ENCODE measurements at regions of chr10 and their contacts with region 1.

Region 1: GRCh38 chr10:784403-785088 is 95.1 kb upstream of the DIP2C start:
- DNase-seq: peak; percentile 45
- H3K4me3 ChIP-seq: peak overlapping the region in 2 of 4 donors; percentile 31 to 40
- H3K27ac ChIP-seq: no peak overlapping the region
- H3K4me1 ChIP-seq: peaks cover 3 to 25% (median 12%) of the 10 kb centered on the region in 4 donors
- H3K27me3 ChIP-seq: peaks cover 15% of the 10 kb centered on the region
- CTCF ChIP-seq: no peak
- EP300 ChIP-seq: no peak
- POLR2A ChIP-seq: no peak

Region 2: DNA sequence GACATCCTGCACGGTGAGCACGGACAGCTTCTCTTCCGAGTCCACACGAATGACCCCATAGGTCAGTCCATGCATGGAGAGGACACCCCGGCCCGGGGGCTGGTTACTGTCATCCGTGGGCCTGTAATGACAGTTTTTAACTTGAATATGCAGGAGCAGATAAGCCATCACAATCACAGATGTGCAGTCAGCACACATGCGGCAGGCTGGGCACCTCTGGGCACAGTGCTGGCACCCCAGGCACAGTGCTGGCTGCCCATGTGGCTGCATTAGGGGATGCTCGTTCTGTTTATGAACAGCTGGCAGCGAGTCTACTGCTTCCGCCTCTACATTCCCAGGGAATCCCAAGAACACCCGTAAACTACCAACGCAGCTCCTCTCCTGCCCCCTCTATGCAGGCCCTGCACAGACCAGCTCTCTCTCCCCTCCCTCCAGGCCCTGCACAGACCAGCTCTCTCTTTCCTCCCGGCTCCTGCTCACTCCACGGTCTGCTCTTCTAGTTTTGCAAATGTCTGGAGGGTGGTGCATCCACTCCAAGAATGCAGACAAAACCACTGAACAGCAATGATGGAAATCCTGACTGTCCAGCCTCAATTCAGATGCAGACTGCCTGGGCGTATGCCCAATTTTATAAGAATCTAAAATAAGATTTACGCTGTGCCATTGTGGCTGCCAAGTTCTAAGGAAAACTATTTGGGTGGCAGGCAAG is 414.9 kb before region 1 on chr10:
- in situ Hi-C with region 1: no loop called
- intact Hi-C with region 1: loop called (anchors 10 kb)
- DNase-seq: no peak
- H3K4me3 ChIP-seq: no peak overlapping the region
- H3K27ac ChIP-seq: peak overlapping the region in 3 of 4 donors; percentile 47 to 66 (median 50)
- H3K4me1 ChIP-seq: peaks cover 3 to 17% (median 10%) of the 10 kb centered on the region in 4 donors
- H3K27me3 ChIP-seq: no peaks in the 10 kb centered on the region
- CTCF ChIP-seq: no peak
- EP300 ChIP-seq: no peak
- POLR2A ChIP-seq: no peak

Region 3: DNA sequence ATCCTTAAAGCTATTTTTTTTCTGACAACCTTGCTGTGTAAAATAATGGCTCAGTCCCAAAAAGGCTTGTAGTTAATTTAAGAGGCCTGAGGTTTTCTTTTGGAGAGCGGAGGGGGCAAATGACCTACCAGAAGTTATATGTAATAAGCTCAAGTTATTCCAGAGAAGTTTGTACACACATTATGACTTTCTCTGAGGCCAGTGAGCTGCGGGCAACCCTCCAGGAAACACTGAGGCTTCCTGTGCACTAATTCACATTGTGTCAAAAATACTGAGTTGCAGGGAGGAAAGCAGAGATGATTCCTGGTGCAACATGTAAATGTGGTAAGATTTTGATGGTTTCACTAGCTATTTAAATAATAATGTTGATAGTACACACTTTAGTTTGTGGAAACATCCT is 283.7 kb before region 1 on chr10:
- in situ Hi-C with region 1: loop called in 2 of 4 experiments (anchors 25 kb)
- intact Hi-C with region 1: loop called (anchors 10 kb)
- DNase-seq: no peak
- H3K4me3 ChIP-seq: no peak overlapping the region
- H3K27ac ChIP-seq: peak overlapping the region in 3 of 4 donors; percentile 32 to 46 (median 32)
- H3K4me1 ChIP-seq: peaks cover 0 to 16% (median 4%) of the 10 kb centered on the region in 4 donors
- H3K27me3 ChIP-seq: no peaks in the 10 kb centered on the region
- CTCF ChIP-seq: no peak
- EP300 ChIP-seq: no peak
- POLR2A ChIP-seq: no peak

Region 4: GRCh38 chr10:511101-511848 is 273.3 kb before region 1 on chr10:
- in situ Hi-C with region 1: loop called in 2 of 4 experiments (anchors 25 kb)
- intact Hi-C with region 1: loop called (anchors 10 kb)
- DNase-seq: peak; percentile 92
- H3K4me3 ChIP-seq: no peak overlapping the region
- H3K27ac ChIP-seq: peak overlapping the region; percentile 21 to 74 (median 58)
- H3K4me1 ChIP-seq: peaks cover 4 to 23% (median 17%) of the 10 kb centered on the region in 4 donors
- H3K27me3 ChIP-seq: no peaks in the 10 kb centered on the region
- CTCF ChIP-seq: peak; percentile 95 to 97 (median 96)
- EP300 ChIP-seq: no peak
- POLR2A ChIP-seq: no peak

Region 5: DNA sequence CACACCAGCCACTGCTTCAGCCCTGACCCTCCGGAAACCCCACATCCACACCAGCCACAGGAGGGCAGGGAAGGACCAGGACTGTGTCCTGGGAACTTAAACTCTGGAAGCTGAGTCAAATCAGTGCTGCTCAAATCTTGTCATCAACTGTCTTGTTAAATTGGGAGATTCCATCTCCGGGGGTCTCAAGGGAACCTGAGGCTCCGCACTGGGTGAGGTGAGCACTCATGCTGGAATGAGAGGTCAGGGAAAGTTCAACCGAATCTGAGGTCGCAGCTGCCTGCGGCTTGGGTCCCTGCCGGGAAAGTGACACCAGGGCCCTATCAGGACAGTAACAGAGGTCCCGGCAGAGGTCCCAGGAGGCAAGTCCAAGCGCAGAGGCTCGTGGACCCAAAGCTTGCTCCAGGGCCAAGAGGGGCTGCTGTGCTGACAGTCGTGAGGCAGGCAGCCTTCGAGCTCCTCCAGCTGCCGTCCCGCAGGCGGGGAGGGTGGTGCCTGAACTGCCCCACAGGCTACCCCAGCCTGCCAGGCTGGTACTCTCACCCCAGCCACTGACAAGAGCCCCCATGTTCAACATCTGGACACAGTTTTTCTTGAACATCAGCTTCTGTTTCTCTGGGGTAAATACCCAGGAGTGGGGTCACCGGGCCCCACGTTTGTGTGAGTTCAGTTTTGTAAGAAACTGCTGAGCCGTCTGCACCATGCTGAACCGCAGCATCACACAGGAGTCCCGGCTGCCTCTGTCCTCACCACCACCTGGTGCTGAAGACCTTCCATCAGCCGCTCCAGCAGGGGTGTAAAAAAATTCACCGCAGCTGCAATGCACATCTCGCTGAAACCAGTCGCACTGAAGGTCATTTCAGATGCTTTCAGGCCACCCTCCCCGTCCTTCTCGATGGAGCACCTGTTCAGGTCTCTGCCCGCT is 196.0 kb before region 1 on chr10:
- in situ Hi-C with region 1: no loop called
- intact Hi-C with region 1: loop called (anchors 10 kb)
- DNase-seq: no peak
- H3K4me3 ChIP-seq: no peak overlapping the region
- H3K27ac ChIP-seq: no peak overlapping the region
- H3K4me1 ChIP-seq: peaks cover 0 to 8% (median 3%) of the 10 kb centered on the region in 4 donors
- H3K27me3 ChIP-seq: no peaks in the 10 kb centered on the region
- CTCF ChIP-seq: peak in 1 of 5 experiments; percentile 16
- EP300 ChIP-seq: no peak
- POLR2A ChIP-seq: no peak

Region 6: GRCh38 chr10:839550-840205 is 55.1 kb after region 1 on chr10:
- in situ Hi-C with region 1: no loop called
- intact Hi-C with region 1: no loop called
- DNase-seq: no peak
- H3K4me3 ChIP-seq: no peak overlapping the region
- H3K27ac ChIP-seq: no peak overlapping the region
- H3K4me1 ChIP-seq: no peaks in the 10 kb centered on the region
- H3K27me3 ChIP-seq: no peaks in the 10 kb centered on the region
- CTCF ChIP-seq: no peak
- EP300 ChIP-seq: no peak
- POLR2A ChIP-seq: no peak

Measured in transverse colon (tissue), 4 donors.